Activated CD8-positive, alpha-beta T cell treated with anti-CD3 and anti-CD28 coated beads for 36 hours (primary cell): ENCODE measurements at regions of chr4 and their contacts with region 1.

Region 1: DNA sequence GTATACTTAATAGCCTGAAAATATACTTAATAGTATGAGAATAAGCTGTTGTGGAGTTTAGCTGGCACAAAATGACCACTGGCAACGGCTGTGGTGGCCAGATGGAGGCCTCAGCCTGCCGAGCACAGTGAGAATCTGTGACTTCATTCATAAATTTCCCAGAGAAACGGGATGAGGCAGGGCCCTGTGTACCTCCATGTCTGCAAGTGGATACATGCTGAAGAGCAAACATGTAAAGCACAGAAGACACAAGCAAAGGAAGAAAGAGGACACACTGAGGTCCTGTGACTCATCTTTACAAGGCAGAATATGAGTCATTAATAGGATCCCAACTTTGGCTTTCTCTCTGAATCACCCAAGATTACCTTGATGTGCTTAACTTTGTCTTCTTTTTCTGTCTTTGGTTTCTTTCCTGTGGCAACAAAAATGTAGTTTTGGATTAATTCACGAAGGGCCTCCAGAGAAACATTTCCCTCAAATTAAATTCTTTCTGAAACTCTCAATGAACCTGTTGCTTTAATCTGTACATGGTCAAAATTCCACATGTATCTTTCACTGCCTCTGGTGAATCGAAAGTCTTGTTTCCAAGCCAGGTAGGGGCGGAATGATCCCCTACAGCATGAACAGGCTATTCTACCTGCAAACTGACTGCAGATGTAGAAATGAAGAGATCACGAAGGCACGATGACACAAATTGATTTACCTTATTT is 56.4 kb downstream of the IRF2 start:
- DNase-seq: peak; percentile 22
- ATAC-seq: peak; percentile 76
- H3K4me3 Mint-ChIP-seq: peak overlapping the region; percentile 70
- H3K27ac Mint-ChIP-seq: peak overlapping the region; percentile 93
- H3K4me1 Mint-ChIP-seq: peaks cover 81% of the 10 kb centered on the region
- H3K27me3 Mint-ChIP-seq: no peaks in the 10 kb centered on the region
- CTCF ChIP-seq: no peak

Region 2: GRCh38 chr4:184310171-184310567 is 107.8 kb before region 1 on chr4:
- CTCF ChIA-PET with region 1: interaction called, 4 read pairs
- POLR2A ChIA-PET with region 1: interaction called, 4 read pairs
- intact Hi-C with region 1: loop called (anchors 5 kb)
- DNase-seq: peak; percentile 72
- ATAC-seq: peak; percentile 51
- H3K4me3 Mint-ChIP-seq: peak overlapping the region; percentile 18
- H3K27ac Mint-ChIP-seq: peak overlapping the region; percentile 88
- H3K4me1 Mint-ChIP-seq: peaks cover 68% of the 10 kb centered on the region
- H3K27me3 Mint-ChIP-seq: no peaks in the 10 kb centered on the region
- CTCF ChIP-seq: peak; percentile 60

Region 3: DNA sequence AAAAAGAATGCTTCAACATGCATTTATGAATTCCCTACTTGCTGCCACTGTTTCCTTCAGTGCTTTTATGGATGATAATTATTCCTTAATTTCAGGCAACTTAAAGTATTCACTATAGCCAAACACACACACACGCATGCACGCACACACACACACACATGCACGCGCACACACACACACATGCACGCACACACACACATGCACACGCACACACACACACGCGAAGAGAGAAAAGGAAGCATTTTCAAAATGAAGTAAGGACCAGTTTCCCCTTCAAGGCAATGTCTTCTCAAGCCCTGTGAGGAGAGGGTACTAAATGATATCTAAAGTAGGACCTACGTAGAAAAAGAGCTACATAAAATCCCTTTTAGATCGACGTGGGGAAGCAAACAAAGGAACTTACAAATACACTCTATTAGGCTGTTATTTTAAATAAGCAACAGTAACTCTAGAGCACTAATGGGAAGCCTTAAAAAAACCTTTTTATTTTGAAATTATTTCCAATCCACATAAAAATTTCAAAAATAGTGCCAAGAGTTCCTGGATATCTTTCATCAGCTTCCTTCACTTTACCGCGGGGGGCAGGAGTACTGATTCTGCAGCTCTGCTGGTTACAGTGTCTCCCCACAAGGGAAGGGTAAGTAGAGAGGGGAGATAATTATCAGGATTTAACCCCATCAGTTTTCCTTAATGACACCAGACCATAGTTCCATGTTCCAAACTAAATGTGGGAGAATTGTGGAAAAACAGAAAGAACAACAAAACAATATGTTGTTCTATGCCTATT is 42.7 kb after region 1 on chr4:
- CTCF ChIA-PET with region 1: interaction called, 8 read pairs
- POLR2A ChIA-PET with region 1: no interaction called
- intact Hi-C with region 1: loop called (anchors 5 kb)
- DNase-seq: no peak
- ATAC-seq: no peak
- H3K4me3 Mint-ChIP-seq: no peak overlapping the region
- H3K27ac Mint-ChIP-seq: peak overlapping the region; percentile 55
- H3K4me1 Mint-ChIP-seq: peaks cover 80% of the 10 kb centered on the region
- H3K27me3 Mint-ChIP-seq: no peaks in the 10 kb centered on the region
- CTCF ChIP-seq: no peak

Region 4: DNA sequence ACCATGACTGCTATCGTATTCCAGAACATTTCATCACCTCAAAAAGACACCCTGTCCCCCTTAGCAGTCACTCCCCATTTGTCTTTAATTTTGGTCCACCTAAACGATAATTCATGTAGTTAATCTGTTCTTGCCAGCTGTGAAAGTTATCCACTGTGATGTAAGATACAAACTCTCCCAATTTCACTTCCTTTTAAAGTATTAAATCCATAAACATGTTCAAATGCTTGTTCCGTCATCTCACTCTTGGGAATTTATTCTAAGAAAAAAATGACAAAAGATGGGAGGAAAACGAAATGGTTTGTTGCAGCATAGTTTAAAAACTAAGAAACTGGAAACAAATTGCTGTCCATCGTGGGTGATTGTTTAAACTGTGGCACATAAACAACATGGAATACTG is 110.1 kb after region 1 on chr4:
- CTCF ChIA-PET with region 1: no interaction called
- POLR2A ChIA-PET with region 1: no interaction called
- intact Hi-C with region 1: no loop called
- DNase-seq: no peak
- ATAC-seq: no peak
- H3K4me3 Mint-ChIP-seq: no peak overlapping the region
- H3K27ac Mint-ChIP-seq: peak overlapping the region; percentile 20
- H3K4me1 Mint-ChIP-seq: peaks cover 40% of the 10 kb centered on the region
- H3K27me3 Mint-ChIP-seq: no peaks in the 10 kb centered on the region
- CTCF ChIP-seq: no peak